ENCODE measurements at regions of chr6 and their contacts with region 1.

Region 1: DNA sequence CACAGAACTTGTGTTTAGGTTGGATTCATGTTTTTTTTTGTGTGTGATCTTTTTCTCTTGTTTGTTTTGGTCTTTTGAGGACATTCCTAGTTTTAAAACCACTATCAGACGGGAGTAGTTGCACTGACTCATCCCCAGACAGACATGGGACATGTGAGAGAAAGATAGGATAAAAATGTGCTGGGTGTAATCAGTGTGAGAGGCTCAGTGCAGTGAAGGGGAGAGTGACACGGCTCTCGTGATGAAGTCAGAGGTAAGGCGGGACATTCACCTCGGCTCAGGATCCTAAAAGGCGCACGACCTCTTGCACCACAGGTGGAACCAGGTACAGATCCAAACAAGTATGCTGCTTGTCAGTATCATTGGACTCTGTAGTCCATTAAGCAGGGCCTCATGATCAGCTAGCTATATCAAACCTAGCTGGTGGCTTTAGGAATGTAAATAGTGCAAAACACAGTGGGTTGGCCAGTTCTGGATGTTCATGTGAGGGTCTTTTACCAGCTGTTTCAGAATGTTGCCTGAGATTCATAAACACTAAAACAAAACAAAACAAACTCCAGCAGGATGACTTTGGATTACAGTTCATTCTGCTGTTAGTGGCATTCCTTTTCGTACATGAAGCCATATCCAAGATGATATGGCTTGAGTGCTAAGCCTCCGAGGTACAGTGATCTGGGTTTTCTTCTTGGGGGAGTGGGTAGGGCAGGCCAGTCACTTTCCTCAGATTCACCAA is 18.0 kb downstream of the FOXO3 start:
- DNase-seq: peak in 2 of 4 donors; percentile 83 to 86
- ATAC-seq: peak; percentile 14
- H3K4me3 ChIP-seq: no peak overlapping the region
- H3K27ac ChIP-seq: peak overlapping the region; percentile 11 to 14
- H3K4me1 ChIP-seq: peaks cover 59 to 94% of the 10 kb centered on the region in 2 donors
- H3K27me3 ChIP-seq: no peaks in the 10 kb centered on the region
- CTCF ChIP-seq: no peak

Region 2: DNA sequence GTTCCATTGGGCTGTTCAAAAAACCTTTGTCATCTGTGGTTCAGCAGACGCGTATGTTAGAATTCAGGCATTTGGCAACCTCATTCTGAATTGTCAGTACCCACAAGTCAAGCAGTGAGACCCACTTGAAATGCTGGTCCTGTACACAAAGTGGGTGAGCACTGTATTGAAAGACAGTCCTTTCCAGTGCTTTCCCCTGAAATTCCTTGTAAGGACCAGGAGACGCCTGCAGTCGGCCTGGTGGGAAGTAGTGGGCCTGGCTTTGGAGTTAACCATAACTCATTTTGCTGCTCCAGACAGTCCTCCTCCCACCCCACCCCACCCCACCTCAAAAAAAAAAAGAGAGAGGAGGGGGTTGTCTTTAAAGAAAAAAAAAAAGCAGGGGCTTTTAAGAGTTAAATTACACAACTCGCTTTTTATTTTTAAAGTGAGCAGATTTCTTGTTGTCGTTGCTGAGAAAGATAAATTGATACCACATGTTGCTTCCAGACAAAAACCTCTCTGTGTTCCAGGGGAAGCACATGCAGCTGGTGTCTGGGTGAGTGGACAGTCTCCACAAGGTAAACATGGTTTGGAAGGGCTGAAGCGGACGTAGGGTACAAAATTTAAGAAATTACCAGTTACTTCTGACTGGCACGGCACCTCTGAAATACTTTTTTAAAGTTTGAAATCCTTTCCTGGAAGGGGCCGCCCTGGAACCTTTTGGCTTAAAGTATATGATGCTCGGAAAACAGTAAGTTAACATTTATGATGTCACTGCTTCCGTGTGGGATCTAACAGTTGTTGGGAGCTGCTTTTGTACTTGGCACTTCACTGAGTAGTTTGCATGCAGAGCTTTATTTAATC is 77.3 kb after region 1 on chr6:
- intact Hi-C with region 1: loop called in 1 of 2 experiments (anchors 10 kb)
- DNase-seq: no peak
- ATAC-seq: peak; percentile 25
- H3K4me3 ChIP-seq: no peak overlapping the region
- H3K27ac ChIP-seq: peak overlapping the region; percentile 51 to 55
- H3K4me1 ChIP-seq: peaks cover 32 to 63% of the 10 kb centered on the region in 2 donors
- H3K27me3 ChIP-seq: no peaks in the 10 kb centered on the region
- CTCF ChIP-seq: no peak

Region 3: GRCh38 chr6:108883172-108883571 is 304.4 kb after region 1 on chr6:
- intact Hi-C with region 1: no loop called
- DNase-seq: no peak
- ATAC-seq: no peak
- H3K4me3 ChIP-seq: no peak overlapping the region
- H3K27ac ChIP-seq: no peak overlapping the region
- H3K4me1 ChIP-seq: no peaks in the 10 kb centered on the region
- H3K27me3 ChIP-seq: no peaks in the 10 kb centered on the region
- CTCF ChIP-seq: no peak

Measured in left lung (tissue), 14 donors.